CD4-positive, alpha-beta memory T cell (primary cell): ENCODE measurements at regions of chr5 and their contacts with region 1.

Region 1: DNA sequence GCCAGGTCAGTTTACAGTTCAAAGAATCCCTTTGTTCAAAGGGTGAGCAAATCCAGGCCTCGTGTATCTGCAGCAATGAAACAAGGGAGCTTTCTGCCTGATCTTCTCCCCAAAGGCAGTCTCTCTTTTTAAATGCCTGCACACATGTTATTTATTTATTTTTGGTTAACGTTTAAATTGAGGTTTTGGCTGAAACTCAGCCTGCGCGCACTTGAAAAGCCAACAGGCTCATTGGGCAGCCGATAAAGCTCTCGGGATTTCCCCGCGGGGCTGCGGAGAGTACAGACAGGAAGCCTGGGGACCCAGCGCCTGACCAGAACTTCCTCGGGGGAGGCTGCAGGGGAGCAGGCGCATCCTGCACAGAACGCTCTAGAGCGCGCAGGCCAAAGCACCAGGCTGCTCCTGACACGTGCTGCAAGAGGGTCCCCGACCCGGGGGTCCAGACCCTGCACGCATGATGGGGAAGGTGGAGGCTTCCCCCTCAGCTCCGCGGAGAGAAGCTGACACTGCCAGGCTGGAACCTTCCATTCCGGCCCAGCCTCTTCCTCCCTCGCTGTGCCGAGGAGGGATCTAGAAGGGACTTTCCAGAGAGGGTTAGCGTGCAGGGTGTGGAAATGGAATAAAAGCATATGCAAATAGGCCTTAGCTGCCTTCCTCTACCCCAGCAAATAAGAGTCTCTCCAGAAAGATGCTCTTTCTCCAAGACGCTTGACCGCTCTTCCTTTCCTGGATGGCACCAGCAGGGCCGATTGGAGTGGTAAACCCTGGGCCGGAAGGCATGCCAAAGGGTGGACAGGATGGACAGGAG is 46.1 kb downstream of the PTTG1 start:
- DNase-seq: peak; percentile 70 to 90 (median 77)
- H3K4me3 ChIP-seq: peak overlapping the region; percentile 73 to 75
- H3K4me3 Mint-ChIP-seq: peak overlapping the region; percentile 90 to 99 (median 96)
- H3K27ac ChIP-seq: peak overlapping the region; percentile 70
- H3K27ac Mint-ChIP-seq: peak overlapping the region; percentile 90 to 98 (median 97)
- H3K4me1 ChIP-seq: peaks cover 59% of the 10 kb centered on the region
- H3K4me1 Mint-ChIP-seq: peaks cover 43 to 84% (median 62%) of the 10 kb centered on the region in 4 donors
- H3K27me3 ChIP-seq: no peaks in the 10 kb centered on the region
- H3K27me3 Mint-ChIP-seq: no peaks in the 10 kb centered on the region

Region 2: DNA sequence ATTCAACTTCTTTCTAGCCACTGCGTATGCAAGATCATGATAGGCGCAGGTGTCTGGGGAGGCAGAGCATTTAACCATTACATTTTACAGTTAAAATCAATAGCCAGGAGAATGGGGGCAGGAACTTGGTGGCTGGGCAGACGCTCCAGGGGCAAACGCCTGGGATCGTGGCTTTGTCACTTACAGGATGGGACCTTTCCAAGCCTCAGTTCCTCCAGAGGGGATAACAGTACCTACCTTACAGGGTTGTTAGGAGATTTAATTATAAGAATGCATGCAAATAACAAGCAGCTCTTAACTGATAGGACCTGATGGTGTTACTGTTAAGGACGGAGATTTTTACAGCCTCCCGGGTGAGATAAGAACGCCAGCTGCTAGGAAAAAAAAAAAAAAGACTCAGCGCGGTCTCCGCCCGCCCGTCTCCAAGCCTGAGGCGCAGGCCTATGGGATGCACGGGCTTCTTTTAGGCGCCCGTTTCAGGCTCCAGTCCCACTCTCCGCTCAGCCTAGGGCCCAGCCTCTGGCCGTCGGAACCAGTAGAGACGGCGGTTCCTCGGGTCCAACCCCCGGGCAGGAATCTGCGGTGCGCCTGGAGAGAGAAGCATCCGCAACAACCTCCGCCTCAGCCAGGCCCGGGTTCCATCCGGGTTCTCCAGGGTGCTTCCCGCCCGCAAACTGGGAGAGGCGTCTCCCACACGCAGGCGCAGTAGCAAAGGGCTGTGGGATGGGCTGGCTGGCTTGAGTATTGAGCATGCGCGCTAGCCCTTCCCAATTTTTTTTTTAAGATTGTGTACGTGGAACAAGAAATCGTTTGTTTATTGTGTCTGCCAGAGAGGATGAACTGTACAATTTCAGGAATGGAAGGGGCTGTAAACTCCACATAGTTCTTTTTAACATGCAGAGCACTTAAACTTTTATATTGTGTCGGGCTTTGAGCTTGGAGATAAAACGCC is 68.1 kb before region 1 on chr5 and contains the start of gene FAM200C:
- CTCF ChIA-PET with region 1: no interaction called
- POLR2A ChIA-PET with region 1: no interaction called
- intact Hi-C with region 1: no loop called
- DNase-seq: peak; percentile 58 to 65 (median 63)
- H3K4me3 ChIP-seq: peak within 1 kb of the TSS; percentile 67 to 71
- H3K4me3 Mint-ChIP-seq: peak within 1 kb of the TSS; percentile 90 to 97 (median 93)
- H3K27ac ChIP-seq: peak within 1 kb of the TSS; percentile 54
- H3K27ac Mint-ChIP-seq: peak within 1 kb of the TSS; percentile 65 to 95 (median 83)
- H3K4me1 ChIP-seq: peaks cover 11% of the 10 kb centered on the region
- H3K4me1 Mint-ChIP-seq: peaks cover 12 to 19% (median 17%) of the 10 kb centered on the region in 4 donors
- H3K27me3 ChIP-seq: no peaks in the 10 kb centered on the region
- H3K27me3 Mint-ChIP-seq: no peaks in the 10 kb centered on the region
- total RNA-seq, gene FAM200C: 0.84 to 1.1 TPM

Region 3: DNA sequence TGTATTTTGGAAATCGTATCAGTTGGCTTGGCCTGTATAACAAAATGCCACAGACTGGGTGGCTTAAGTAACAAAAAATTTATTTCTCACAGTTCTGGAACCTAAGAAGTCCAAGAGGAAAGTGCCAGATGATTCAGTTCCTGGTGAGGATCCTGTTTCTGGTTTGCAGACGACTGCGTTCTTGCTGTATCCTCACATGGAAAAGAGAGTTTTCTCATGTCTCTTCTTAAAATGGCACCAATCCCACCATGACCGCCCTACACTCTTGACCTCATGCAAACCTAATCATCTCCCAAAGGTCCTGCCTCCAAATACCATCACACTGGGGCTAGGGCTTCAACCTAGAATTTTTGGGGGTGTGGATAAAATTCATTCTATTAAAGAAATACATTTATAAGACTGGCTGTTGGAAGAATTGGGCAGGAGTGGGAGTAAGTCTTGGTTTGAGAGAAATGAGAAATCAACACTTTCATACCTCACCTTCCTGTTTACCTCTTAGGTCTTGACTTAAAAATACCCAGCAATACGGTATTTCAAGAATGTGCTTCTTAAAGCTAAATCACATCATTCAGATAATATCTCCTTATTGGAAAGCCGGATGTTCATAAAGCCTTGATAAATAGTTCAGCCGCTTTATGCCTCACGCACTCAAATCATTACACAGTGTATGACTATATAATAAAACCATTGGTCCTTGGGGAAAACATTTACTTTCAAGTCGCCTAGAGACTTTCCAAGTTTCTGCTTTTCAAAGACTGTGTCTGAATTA is 17.4 kb before region 1 on chr5:
- CTCF ChIA-PET with region 1: no interaction called
- POLR2A ChIA-PET with region 1: no interaction called
- intact Hi-C with region 1: no loop called
- DNase-seq: no peak
- H3K4me3 ChIP-seq: no peak overlapping the region
- H3K4me3 Mint-ChIP-seq: no peak overlapping the region
- H3K27ac ChIP-seq: no peak overlapping the region
- H3K27ac Mint-ChIP-seq: peak overlapping the region in 1 of 7 donors; percentile 9
- H3K4me1 ChIP-seq: no peaks in the 10 kb centered on the region
- H3K4me1 Mint-ChIP-seq: peaks cover 0 to 6% (median 3%) of the 10 kb centered on the region in 4 donors
- H3K27me3 ChIP-seq: no peaks in the 10 kb centered on the region
- H3K27me3 Mint-ChIP-seq: peaks cover 0 to under 1% of the 10 kb centered on the region in 2 donors

Region 4: DNA sequence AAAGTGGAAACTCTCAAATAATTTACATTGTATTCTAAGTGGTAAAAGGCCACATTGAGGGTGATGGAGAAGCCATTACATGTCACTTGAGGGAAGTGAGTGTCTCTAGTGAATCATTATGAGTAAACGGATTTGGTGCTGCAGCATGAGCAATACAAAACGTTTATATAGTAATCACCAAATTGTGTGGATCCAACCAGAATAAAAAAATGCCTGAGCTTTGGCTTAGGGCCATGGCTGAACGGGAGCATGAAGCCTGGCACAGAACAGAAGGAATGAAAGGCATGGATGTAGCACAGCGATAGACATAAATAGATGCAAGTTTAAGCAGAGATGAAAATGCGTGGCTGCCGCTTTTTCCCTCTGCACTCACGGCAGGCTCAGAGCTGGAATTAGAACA is 12.2 kb after region 1 on chr5:
- CTCF ChIA-PET with region 1: interaction called, 11 read pairs
- POLR2A ChIA-PET with region 1: interaction called, 35 read pairs
- intact Hi-C with region 1: no loop called
- DNase-seq: no peak
- H3K4me3 ChIP-seq: no peak overlapping the region
- H3K4me3 Mint-ChIP-seq: peak overlapping the region in 3 of 8 donors; percentile 10 to 81 (median 29)
- H3K27ac ChIP-seq: peak overlapping the region; percentile 1
- H3K27ac Mint-ChIP-seq: peak overlapping the region in 4 of 7 donors; percentile 36 to 94 (median 60)
- H3K4me1 ChIP-seq: peaks cover 71% of the 10 kb centered on the region
- H3K4me1 Mint-ChIP-seq: peaks cover 37 to 85% (median 55%) of the 10 kb centered on the region in 4 donors
- H3K27me3 ChIP-seq: no peaks in the 10 kb centered on the region
- H3K27me3 Mint-ChIP-seq: no peaks in the 10 kb centered on the region

Region 5: DNA sequence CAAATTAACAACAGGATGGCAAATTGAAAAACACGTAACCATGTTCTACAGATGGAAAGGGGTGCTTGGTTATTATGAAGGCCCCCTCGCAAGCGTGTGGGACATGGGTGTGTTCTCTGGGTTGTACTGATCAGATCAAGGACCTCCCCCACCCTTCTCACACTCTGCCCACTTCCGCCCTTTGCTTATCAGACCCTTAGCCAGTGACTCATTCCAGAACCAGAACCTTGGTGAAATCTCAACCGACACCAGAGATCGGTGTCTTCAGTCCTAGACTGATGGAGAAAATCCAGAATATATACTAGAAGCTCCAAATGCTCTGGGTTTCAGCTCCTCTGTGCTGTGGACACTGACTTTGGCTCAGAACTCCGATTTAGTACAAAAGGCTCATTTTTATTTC is 18.8 kb after region 1 on chr5:
- CTCF ChIA-PET with region 1: no interaction called
- POLR2A ChIA-PET with region 1: interaction called, 27 read pairs
- intact Hi-C with region 1: loop called (anchors 2 kb)
- DNase-seq: peak in 3 of 5 donors; percentile 26 to 68 (median 29)
- H3K4me3 ChIP-seq: no peak overlapping the region
- H3K4me3 Mint-ChIP-seq: peak overlapping the region in 7 of 8 donors; percentile 5 to 72 (median 54)
- H3K27ac ChIP-seq: peak overlapping the region; percentile 15
- H3K27ac Mint-ChIP-seq: peak overlapping the region; percentile 60 to 90 (median 72)
- H3K4me1 ChIP-seq: peaks cover 40% of the 10 kb centered on the region
- H3K4me1 Mint-ChIP-seq: peaks cover 25 to 55% (median 33%) of the 10 kb centered on the region in 4 donors
- H3K27me3 ChIP-seq: no peaks in the 10 kb centered on the region
- H3K27me3 Mint-ChIP-seq: no peaks in the 10 kb centered on the region